HepG2 (cell line): ENCODE measurements at regions of chr9 and their contacts with region 1.

Region 1: GRCh38 chr9:684054-684890 is 157.2 kb upstream of the DMRT1 start:
- DNase-seq: no peak
- ATAC-seq: no peak
- H3K4me3 ChIP-seq: peak overlapping the region; percentile 67 to 74 (median 67)
- H3K27ac ChIP-seq: peak overlapping the region; percentile 94
- H3K4me1 ChIP-seq: peaks cover 79% of the 10 kb centered on the region
- H3K27me3 ChIP-seq: no peaks in the 10 kb centered on the region; a peak in 1 of 5 replicates
- CTCF ChIP-seq: no peak
- EP300 ChIP-seq: no peak
- POLR2A ChIP-seq: peak in 1 of 2 experiments; percentile 49; a peak in 1 of 4 replicates
- RAD21 ChIP-seq: no peak

Region 2: DNA sequence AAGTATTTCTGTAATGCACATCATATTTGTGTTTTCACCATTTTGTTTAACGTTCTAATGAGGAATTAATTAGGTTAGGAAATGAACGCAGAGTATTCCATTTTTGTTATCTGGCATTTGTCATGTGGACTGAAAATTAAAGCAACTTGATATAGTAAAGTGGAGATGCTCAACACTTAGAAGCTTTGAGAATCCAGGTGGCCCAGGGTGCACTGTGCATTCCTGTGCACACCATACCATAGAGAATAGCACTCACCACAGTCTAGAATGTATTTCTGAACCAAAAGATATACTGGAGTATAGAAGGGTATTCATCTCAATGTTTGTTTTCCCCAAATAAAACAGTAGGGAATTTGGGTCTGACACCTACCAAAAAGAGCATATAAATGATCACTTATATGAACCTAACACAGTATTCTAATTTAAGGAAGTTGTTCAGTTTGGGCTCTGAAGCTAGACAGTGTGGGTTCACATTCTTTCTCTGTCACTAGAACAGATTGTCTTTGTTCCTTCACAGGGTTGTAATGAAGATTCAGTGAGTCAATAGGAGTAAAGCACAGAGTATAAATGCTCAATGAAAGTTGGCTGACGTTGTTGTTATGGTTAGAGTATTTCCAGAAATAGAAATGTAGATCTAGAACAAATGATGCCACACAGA is 31.6 kb after region 1 on chr9:
- CTCF ChIA-PET with region 1: no interaction called
- POLR2A ChIA-PET with region 1: interaction called, 320 read pairs
- in situ Hi-C with region 1: no loop called
- intact Hi-C with region 1: loop called (anchors 2 kb)
- DNase-seq: peak; percentile 53
- ATAC-seq: peak; percentile 64
- H3K4me3 ChIP-seq: peak overlapping the region; percentile 36 to 57 (median 47); a peak in 5 of 6 replicates
- H3K27ac ChIP-seq: peak overlapping the region; percentile 25
- H3K4me1 ChIP-seq: peaks cover 99% of the 10 kb centered on the region
- H3K27me3 ChIP-seq: no peaks in the 10 kb centered on the region
- CTCF ChIP-seq: no peak
- EP300 ChIP-seq: no peak
- POLR2A ChIP-seq: no peak
- RAD21 ChIP-seq: no peak

Region 3: DNA sequence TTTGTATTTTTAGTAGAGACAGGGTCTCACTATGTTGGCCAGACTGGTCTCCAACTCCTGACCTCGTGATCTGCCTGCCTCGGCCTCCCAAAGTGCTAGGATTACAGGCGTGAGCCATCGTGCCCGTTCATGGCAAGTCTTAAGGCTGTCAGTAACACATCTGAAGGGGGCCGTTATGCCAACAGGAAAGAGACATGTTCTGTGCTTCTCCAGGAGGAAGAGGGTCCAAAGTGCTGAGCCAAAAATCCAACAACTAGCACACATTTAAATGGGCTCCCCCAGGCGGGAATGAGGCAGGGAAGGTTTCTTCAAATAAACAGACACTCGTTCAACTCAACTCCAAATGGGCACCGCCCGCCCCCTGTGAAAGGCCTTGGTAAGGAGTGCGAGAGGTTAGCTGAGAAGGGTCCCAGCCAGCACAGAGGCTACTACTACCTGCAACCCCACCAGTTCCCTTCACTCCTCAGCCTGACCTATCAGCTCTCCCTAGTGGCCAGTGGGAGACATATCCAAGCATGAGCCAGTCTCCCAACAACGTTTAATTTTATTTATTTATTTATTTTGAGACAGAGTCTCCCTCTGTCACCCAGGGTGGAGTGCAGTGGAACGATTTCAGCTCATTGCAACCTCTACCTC is 73.1 kb after region 1 on chr9:
- CTCF ChIA-PET with region 1: no interaction called
- POLR2A ChIA-PET with region 1: interaction called, 20 read pairs
- in situ Hi-C with region 1: no loop called
- intact Hi-C with region 1: loop called (anchors 2 kb)
- DNase-seq: peak; percentile 69
- ATAC-seq: peak; percentile 72
- H3K4me3 ChIP-seq: no peak overlapping the region
- H3K27ac ChIP-seq: no peak overlapping the region
- H3K4me1 ChIP-seq: peaks cover 73% of the 10 kb centered on the region
- H3K27me3 ChIP-seq: no peaks in the 10 kb centered on the region
- CTCF ChIP-seq: peak; percentile 73
- EP300 ChIP-seq: no peak
- POLR2A ChIP-seq: no peak
- RAD21 ChIP-seq: peak; percentile 62

Region 4: DNA sequence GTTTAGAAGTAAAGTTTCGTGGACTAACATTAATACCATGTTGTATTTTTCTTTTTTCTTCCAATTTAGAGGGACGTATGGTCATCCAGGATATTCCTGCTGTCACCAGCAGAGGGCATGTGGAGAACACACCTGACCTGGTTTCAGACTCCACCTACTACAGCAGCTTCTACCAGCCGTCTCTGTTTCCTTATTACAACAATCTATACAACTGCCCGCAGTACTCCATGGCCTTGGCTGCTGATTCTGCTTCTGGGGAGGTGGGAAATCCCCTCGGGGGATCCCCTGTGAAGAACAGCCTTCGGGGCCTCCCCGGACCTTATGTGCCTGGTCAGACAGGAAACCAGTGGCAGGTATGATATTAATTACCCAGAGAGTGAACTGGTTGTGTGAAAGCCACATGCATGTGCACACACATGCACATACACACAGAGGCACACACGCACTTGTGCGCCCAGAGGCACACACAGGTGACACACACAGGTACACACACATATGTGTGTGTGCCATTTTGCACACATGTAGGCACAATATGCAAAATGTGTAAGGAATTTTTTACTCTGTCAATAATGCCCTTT is 209.7 kb after region 1 on chr9:
- CTCF ChIA-PET with region 1: no interaction called
- POLR2A ChIA-PET with region 1: no interaction called
- in situ Hi-C with region 1: no loop called
- intact Hi-C with region 1: no loop called
- DNase-seq: peak; percentile 56
- ATAC-seq: peak; percentile 95
- H3K4me3 ChIP-seq: no peak overlapping the region
- H3K27ac ChIP-seq: no peak overlapping the region
- H3K4me1 ChIP-seq: no peaks in the 10 kb centered on the region
- H3K27me3 ChIP-seq: peaks cover 0 to 6% of the 10 kb centered on the region in 2 experiments; a peak in 2 of 5 replicates
- CTCF ChIP-seq: peak; percentile 82
- EP300 ChIP-seq: no peak
- POLR2A ChIP-seq: no peak
- RAD21 ChIP-seq: peak; percentile 47; the same call in 1 of the 2 replicates